ENCODE measurements at regions of chr4 and their contacts with region 1.

Region 1: DNA sequence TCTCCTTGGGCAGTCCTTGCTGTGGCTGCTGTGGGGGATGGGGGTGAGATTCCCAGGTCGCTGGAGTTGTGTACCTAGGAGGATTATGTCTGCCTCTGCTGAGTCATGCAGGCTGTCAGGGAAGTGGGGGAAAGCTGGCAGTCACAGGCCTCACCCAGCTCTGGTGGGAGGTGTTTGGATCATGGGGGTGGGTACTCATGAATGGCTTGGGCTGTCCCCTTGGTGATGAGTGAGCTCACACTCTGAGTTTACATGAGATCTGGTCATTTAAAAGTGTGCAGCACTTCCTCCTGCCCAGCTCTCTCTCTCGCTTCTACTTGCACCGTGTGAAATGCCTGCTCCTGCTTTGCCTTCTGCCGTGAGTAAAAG is 24.6 kb upstream of the PDLIM3 start:
- DNase-seq: peak; percentile 78 to 90
- H3K4me3 ChIP-seq: no peak overlapping the region
- H3K27ac ChIP-seq: peak overlapping the region; percentile 73
- H3K4me1 ChIP-seq: peaks cover 16% of the 10 kb centered on the region
- H3K27me3 ChIP-seq: no peaks in the 10 kb centered on the region
- CTCF ChIP-seq: no peak

Region 2: GRCh38 chr4:185358514-185358913 is 201.4 kb before region 1 on chr4:
- CTCF ChIA-PET with region 1: no interaction called
- POLR2A ChIA-PET with region 1: interaction called, 16 read pairs
- intact Hi-C with region 1: no loop called
- DNase-seq: peak; percentile 53 to 73
- H3K4me3 ChIP-seq: no peak overlapping the region
- H3K27ac ChIP-seq: peak overlapping the region; percentile 53
- H3K4me1 ChIP-seq: peaks cover 18% of the 10 kb centered on the region
- H3K27me3 ChIP-seq: no peaks in the 10 kb centered on the region
- CTCF ChIP-seq: no peak

Region 3: DNA sequence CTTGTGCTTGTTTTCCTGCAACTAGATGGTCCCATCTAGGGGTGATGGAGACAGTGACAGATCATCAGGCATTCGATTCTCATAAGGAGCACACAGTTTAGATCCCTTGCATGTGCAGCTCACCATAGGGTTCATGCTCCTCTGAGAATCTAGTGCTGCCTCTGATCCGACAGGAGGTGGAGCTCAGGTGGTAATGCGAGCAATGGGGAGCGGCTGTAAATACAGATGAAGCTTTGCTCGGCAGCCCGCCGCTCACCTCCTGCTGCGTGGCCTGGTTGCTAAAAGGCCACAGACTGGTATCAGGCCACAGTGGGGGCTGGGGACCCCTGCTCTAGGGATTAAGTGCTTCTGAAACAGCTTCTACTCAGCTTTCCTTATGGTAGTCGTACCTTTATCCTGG is 59.9 kb before region 1 on chr4:
- CTCF ChIA-PET with region 1: no interaction called
- POLR2A ChIA-PET with region 1: interaction called, 10 read pairs
- intact Hi-C with region 1: no loop called
- DNase-seq: no peak
- H3K4me3 ChIP-seq: no peak overlapping the region
- H3K27ac ChIP-seq: no peak overlapping the region
- H3K4me1 ChIP-seq: no peaks in the 10 kb centered on the region
- H3K27me3 ChIP-seq: no peaks in the 10 kb centered on the region
- CTCF ChIP-seq: no peak

Region 4: DNA sequence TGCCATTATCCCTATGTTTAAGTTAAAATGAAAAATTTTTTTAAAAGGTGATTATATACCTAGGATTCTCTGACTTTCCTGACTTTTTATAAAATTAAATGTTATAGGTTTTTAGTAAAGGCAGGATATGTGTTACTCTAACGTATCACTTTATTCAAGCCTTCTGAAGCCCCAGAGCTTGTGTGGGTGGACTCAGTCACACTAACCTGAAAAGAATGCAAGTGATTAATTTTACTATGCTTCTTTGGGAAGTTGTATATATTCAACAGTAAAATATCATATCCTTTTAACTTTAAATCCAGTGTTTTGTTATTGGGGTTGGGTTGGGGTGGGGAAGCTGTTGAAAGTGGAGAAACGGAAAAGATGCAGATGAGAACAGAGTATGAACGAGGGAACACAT is 47.4 kb before region 1 on chr4:
- CTCF ChIA-PET with region 1: no interaction called
- POLR2A ChIA-PET with region 1: interaction called, 10 read pairs
- intact Hi-C with region 1: no loop called
- DNase-seq: no peak
- H3K4me3 ChIP-seq: no peak overlapping the region
- H3K27ac ChIP-seq: no peak overlapping the region
- H3K4me1 ChIP-seq: peaks cover 13% of the 10 kb centered on the region
- H3K27me3 ChIP-seq: no peaks in the 10 kb centered on the region
- CTCF ChIP-seq: no peak

Measured in PC-9 (cell line).